ENCODE measurements at regions of chr5 and their contacts with region 1.

Region 1: GRCh38 chr5:173573126-173573960 is 43.1 kb downstream of the BOD1 start:
- DNase-seq: peak; percentile 92
- ATAC-seq: peak; percentile 91

Region 2: GRCh38 chr5:173293817-173294672 is 279.3 kb before region 1 on chr5:
- intact Hi-C with region 1: loop called (anchors 2 kb)
- DNase-seq: peak; percentile 89
- ATAC-seq: peak; percentile 55

Region 3: GRCh38 chr5:173331956-173332479 is 241.3 kb before region 1 on chr5:
- intact Hi-C with region 1: loop called (anchors 10 kb)
- DNase-seq: peak; percentile 92
- ATAC-seq: peak; percentile 86

Region 4: GRCh38 chr5:173451031-173451430 is 122.3 kb before region 1 on chr5:
- intact Hi-C with region 1: loop called (anchors 5 kb)
- DNase-seq: no peak
- ATAC-seq: no peak

Region 5: GRCh38 chr5:173472141-173472543 is 101.2 kb before region 1 on chr5:
- intact Hi-C with region 1: loop called (anchors 5 kb)
- DNase-seq: no peak
- ATAC-seq: peak; percentile 95

Region 6: GRCh38 chr5:173664154-173664526 is 90.8 kb after region 1 on chr5:
- intact Hi-C with region 1: no loop called
- DNase-seq: peak; percentile 86
- ATAC-seq: peak; percentile 53